ENCODE measurements at regions of chr22 and their contacts with region 1.

Region 1: GRCh38 chr22:30694171-30694639 is 469 bp upstream of the OSBP2 start:
- DNase-seq: peak; percentile 72
- ATAC-seq: peak; percentile 73
- H3K4me3 ChIP-seq: peak overlapping the region in 4 of 5 experiments; percentile 49 to 72 (median 61)
- H3K4me3 Mint-ChIP-seq: peak overlapping the region; percentile 93
- H3K27ac ChIP-seq: peak overlapping the region in 1 of 2 donors; percentile 23
- H3K27ac Mint-ChIP-seq: no peak overlapping the region
- H3K4me1 ChIP-seq: peaks cover 7 to 12% of the 10 kb centered on the region in 2 donors
- H3K4me1 Mint-ChIP-seq: peaks cover 7% of the 10 kb centered on the region
- H3K27me3 ChIP-seq: peaks cover 0 to 38% (median 12%) of the 10 kb centered on the region in 4 experiments
- H3K27me3 Mint-ChIP-seq: peaks cover 46% of the 10 kb centered on the region
- CTCF ChIP-seq: no peak

Region 2: DNA sequence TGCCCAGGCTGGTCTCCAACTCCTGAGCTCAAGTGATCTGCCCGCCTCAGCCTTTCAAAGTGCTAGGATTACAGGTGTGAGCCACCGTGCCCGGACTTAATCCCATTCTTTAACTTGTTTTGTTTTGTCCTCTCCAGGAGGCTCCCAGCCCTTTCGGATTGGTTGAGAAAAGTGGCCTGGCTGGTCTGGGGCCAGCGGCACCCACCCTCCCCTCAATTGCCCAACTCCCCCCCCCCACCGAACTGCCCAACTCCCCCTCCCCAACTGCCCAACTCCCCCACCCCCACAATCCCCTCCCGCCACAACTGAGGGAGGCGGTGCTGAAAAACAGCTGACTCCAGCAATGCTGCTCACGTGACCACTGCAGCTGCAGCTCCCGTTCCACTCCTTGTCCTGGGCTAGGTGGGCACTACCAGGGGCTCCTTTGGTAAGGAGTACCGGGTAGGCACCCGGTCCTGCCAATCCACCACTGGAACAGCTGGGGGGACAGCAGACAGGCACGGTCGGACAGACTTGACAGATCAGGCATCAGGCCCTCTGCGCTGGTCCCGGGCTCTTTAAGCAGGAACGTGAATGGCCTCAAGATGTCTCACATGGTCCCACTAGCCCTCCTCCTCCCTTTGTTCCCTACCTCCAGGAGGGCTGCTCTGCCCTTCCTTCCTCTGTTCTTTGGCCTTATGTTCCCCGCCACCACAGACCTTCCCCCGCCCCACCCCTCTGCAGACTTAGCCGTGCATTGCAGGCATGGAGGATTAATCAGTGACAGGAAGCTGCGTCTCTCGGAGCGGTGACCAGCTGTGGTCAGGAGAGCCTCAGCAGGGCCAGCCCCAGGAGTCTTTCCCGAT is 87.5 kb before region 1 on chr22 and contains the start of gene TCN2:
- CTCF ChIA-PET with region 1: no interaction called
- POLR2A ChIA-PET with region 1: no interaction called
- intact Hi-C with region 1: loop called (anchors 2 kb)
- DNase-seq: peak; percentile 38
- ATAC-seq: peak; percentile 55
- H3K4me3 ChIP-seq: peak within 1 kb of the TSS; percentile 26 to 70 (median 59)
- H3K4me3 Mint-ChIP-seq: peak within 1 kb of the TSS; percentile 90
- H3K27ac ChIP-seq: no peak within 1 kb of the TSS
- H3K27ac Mint-ChIP-seq: peak within 1 kb of the TSS; percentile 64
- H3K4me1 ChIP-seq: peaks cover 18 to 42% of the 10 kb centered on the region in 2 donors
- H3K4me1 Mint-ChIP-seq: peaks cover 29% of the 10 kb centered on the region
- H3K27me3 ChIP-seq: no peaks in the 10 kb centered on the region
- H3K27me3 Mint-ChIP-seq: peaks cover 15% of the 10 kb centered on the region
- CTCF ChIP-seq: no peak
- total RNA-seq, gene TCN2: 0.19 and 0.37 TPM in 2 replicates

Region 3: DNA sequence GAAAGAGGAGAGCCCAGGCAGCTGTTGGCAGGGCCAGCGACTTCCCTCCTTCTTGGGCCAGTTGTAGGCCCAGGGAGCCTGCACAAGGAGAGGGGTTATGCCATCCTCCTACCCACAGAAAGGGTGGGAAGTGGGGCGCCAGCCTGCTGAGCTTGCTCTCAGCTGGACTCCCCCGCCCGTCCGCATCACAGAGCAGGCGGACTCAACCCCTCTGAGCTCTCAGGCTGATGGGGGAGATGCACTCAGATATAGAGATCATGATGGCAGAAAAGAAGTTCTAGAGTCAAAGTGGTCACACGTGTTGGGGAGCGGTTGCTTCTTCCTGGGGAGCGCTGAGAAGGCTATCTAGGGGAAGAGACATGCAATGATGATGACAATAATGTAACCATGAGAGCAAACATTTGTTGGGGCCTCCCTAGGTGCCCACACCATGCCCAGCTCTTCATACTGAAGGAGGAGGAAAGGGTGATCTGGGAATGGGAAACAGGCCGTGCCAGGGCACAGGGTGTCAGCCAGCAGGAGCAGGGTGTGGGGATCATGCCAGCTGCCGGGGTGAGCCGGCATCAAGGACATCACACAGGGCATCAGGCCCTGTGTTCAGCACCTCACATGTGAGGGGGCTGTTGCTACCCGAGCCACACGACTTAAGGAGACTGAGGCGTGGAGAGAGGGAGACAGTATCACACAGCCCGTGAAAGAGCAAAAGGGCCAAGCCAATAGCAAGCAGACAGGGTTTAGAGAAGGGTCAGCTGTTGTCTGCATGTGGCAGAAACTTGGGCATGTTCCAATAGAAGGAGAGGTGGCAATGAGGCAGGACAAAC is 50.9 kb before region 1 on chr22:
- CTCF ChIA-PET with region 1: no interaction called
- POLR2A ChIA-PET with region 1: no interaction called
- intact Hi-C with region 1: no loop called
- DNase-seq: no peak
- ATAC-seq: no peak
- H3K4me3 ChIP-seq: no peak overlapping the region
- H3K4me3 Mint-ChIP-seq: no peak overlapping the region
- H3K27ac ChIP-seq: no peak overlapping the region
- H3K27ac Mint-ChIP-seq: no peak overlapping the region
- H3K4me1 ChIP-seq: no peaks in the 10 kb centered on the region
- H3K4me1 Mint-ChIP-seq: no peaks in the 10 kb centered on the region
- H3K27me3 ChIP-seq: no peaks in the 10 kb centered on the region
- H3K27me3 Mint-ChIP-seq: no peaks in the 10 kb centered on the region
- CTCF ChIP-seq: no peak

Region 4: DNA sequence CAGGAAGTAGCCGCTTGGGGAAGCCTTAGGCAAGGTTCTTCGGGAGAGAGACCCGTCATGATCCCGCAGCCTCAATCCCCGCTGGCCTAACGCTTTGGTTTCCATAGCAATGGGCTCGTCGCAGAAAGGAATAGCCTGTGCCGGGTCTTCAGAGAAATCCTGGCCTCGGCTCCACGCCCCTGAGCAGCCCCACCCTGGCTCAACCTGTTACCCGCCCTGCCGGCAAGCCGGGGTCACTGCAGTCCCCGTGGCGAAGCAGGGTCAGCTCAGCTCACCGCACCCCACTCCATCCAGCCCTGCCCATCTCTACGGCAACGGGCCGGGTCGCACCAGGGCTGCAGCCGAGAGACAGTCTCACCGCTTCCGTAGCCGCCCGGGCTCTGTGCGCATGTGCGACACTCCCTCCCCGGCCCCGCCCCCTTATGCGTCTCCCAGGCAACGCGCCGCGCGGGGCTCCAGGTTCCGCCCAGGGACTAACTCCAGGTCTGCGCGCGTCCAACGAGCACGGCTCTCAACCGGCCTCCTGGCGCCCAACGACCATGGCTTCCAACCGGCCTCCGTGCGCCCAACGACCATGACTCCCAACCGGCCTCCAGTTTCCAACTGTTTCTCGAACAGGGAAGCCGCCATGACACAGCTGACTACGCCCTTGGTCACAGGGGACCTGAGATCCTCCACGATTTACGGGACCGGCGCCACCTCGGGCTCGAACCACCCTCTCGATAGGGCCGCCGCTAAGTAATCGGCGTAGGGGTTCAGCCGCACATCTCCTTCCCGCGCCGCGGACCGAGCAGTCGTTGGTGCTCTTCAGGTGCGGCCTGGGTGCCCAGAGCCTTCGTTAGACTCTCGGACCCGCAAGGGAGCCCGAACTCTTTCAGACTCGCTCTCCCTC is 26.5 kb before region 1 on chr22 and contains the start of gene DUSP18:
- CTCF ChIA-PET with region 1: no interaction called
- POLR2A ChIA-PET with region 1: no interaction called
- intact Hi-C with region 1: loop called (anchors 1 kb)
- DNase-seq: peak; percentile 96
- ATAC-seq: peak; percentile 93
- H3K4me3 ChIP-seq: peak within 1 kb of the TSS; percentile 81 to 93 (median 86)
- H3K4me3 Mint-ChIP-seq: peak within 1 kb of the TSS; percentile 98
- H3K27ac ChIP-seq: peak within 1 kb of the TSS; percentile 18 to 53
- H3K27ac Mint-ChIP-seq: peak within 1 kb of the TSS; percentile 92
- H3K4me1 ChIP-seq: peaks cover 12 to 17% of the 10 kb centered on the region in 2 donors
- H3K4me1 Mint-ChIP-seq: peaks cover 21% of the 10 kb centered on the region
- H3K27me3 ChIP-seq: peaks cover 0 to 6% (median 0%) of the 10 kb centered on the region in 4 experiments
- H3K27me3 Mint-ChIP-seq: no peaks in the 10 kb centered on the region
- CTCF ChIP-seq: peak; percentile 41
- total RNA-seq, gene DUSP18: 18.7 and 20.6 TPM in 2 replicates

Region 5: DNA sequence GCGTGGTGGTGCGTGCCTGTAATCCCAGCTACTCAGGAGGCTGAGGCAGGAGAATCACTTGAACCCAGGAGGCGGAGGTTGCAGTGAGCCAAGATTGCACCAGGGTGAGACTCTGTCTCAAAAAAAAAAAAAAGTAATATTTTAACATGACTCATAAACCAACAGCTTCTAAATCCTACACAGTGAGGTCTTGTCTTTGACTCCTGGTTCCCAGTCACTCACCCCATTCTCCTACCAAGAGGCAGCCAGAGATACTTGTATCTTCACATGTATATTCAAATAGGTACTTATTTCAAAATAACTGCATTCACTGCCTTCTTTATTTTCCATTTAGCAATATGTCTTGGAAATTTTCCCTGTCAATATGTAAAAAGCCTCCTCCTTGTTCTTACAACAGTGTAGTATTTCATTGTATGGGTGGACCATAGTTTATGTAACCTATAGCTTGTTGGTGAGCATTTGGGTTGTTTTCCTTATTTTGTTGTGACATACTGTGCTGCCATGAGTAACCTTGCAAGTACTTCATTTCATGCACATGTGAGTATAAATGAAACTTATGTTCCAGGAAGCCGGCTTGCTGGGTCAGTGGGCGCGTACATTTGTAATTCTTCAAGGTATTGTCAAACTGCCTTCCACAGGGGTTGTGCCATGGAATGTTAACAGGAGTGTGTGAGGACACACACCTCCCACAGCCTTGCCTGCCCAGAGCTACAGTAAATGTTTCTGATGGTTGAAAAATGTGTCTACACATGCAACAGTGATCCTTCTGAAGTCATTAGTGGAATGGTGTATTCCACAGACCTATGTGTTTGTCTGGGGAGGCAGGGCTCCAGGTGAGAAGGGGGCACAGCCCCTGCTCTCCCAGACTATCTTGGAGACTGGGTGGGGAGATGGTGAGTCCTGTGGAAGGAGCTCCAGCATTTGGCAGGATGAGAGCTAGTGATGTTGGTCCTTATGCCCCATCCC is 48.4 kb after region 1 on chr22:
- CTCF ChIA-PET with region 1: no interaction called
- POLR2A ChIA-PET with region 1: no interaction called
- intact Hi-C with region 1: no loop called
- DNase-seq: no peak
- ATAC-seq: no peak
- H3K4me3 ChIP-seq: no peak overlapping the region
- H3K4me3 Mint-ChIP-seq: no peak overlapping the region
- H3K27ac ChIP-seq: no peak overlapping the region
- H3K27ac Mint-ChIP-seq: no peak overlapping the region
- H3K4me1 ChIP-seq: peaks cover 4 to 8% of the 10 kb centered on the region in 2 donors
- H3K4me1 Mint-ChIP-seq: peaks cover 3% of the 10 kb centered on the region
- H3K27me3 ChIP-seq: peaks cover 0 to 5% (median 0%) of the 10 kb centered on the region in 4 experiments
- H3K27me3 Mint-ChIP-seq: peaks cover 25% of the 10 kb centered on the region
- CTCF ChIP-seq: no peak

Measured in B cell (primary cell).